ENCODE measurements at regions of chr12 and their contacts with region 1.

Region 1: GRCh38 chr12:14577344-14577743 is 9.7 kb upstream of the PLBD1 start:
- DNase-seq: peak; percentile 25
- ATAC-seq: peak; percentile 72
- H3K4me3 ChIP-seq: no peak overlapping the region
- H3K27ac ChIP-seq: no peak overlapping the region
- H3K4me1 ChIP-seq: peaks cover 2% of the 10 kb centered on the region; the same call in 1 of the 2 replicates
- H3K27me3 ChIP-seq: no peaks in the 10 kb centered on the region
- CTCF ChIP-seq: no peak
- EP300 ChIP-seq: no peak
- POLR2A ChIP-seq: no peak
- RAD21 ChIP-seq: no peak

Region 2: DNA sequence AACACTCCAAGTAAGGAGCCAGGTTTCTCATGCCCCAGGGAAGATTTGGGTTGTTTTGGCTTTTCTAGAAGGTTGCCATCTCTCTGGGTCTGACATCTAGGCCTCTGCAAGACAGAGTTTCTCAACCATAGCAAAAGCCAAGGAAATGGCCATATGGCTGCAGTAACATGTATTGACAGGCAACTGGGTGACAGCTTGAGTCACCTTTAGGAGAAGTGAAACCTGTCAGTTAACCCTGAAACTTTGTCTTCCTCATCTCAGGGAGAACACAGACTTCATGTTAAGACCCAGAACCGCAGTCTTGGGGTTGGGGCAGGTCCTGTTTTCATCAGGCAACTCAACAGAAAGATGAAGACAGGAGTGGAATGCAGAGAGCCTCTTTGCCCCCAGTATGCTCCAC is 36.4 kb after region 1 on chr12:
- CTCF ChIA-PET with region 1: no interaction called
- POLR2A ChIA-PET with region 1: no interaction called
- RAD21 ChIA-PET with region 1: interaction called, 9 read pairs
- SMC1A ChIA-PET with region 1: interaction called, 6 read pairs
- in situ Hi-C with region 1: no loop called
- intact Hi-C with region 1: loop called (anchors 5 kb)
- DNase-seq: peak; percentile 93
- ATAC-seq: peak; percentile 95
- H3K4me3 ChIP-seq: peak overlapping the region; percentile 24; the same call in 1 of the 2 replicates
- H3K27ac ChIP-seq: peak overlapping the region; percentile 82
- H3K4me1 ChIP-seq: peaks cover 27% of the 10 kb centered on the region
- H3K27me3 ChIP-seq: no peaks in the 10 kb centered on the region
- CTCF ChIP-seq: no peak
- EP300 ChIP-seq: peak; percentile 86 to 98
- POLR2A ChIP-seq: no peak; the same call in 1 of the 2 replicates
- RAD21 ChIP-seq: no peak

Region 3: GRCh38 chr12:14716848-14717444 is 139.6 kb after region 1 on chr12:
- CTCF ChIA-PET with region 1: interaction called, 6 read pairs
- POLR2A ChIA-PET with region 1: no interaction called
- RAD21 ChIA-PET with region 1: interaction called, 3 read pairs
- SMC1A ChIA-PET with region 1: interaction called, 6 read pairs
- in situ Hi-C with region 1: no loop called
- intact Hi-C with region 1: loop called (anchors 5 kb)
- DNase-seq: no peak
- ATAC-seq: peak; percentile 94
- H3K4me3 ChIP-seq: no peak overlapping the region
- H3K27ac ChIP-seq: no peak overlapping the region
- H3K4me1 ChIP-seq: no peaks in the 10 kb centered on the region
- H3K27me3 ChIP-seq: no peaks in the 10 kb centered on the region
- CTCF ChIP-seq: peak; percentile 56 to 70 (median 63)
- EP300 ChIP-seq: no peak
- POLR2A ChIP-seq: no peak
- RAD21 ChIP-seq: peak; percentile 67

Region 4: GRCh38 chr12:14731821-14732220 is 154.5 kb after region 1 on chr12:
- CTCF ChIA-PET with region 1: no interaction called
- POLR2A ChIA-PET with region 1: no interaction called
- RAD21 ChIA-PET with region 1: no interaction called
- SMC1A ChIA-PET with region 1: no interaction called
- in situ Hi-C with region 1: no loop called
- intact Hi-C with region 1: no loop called
- DNase-seq: no peak
- ATAC-seq: no peak
- H3K4me3 ChIP-seq: no peak overlapping the region
- H3K27ac ChIP-seq: no peak overlapping the region
- H3K4me1 ChIP-seq: no peaks in the 10 kb centered on the region
- H3K27me3 ChIP-seq: no peaks in the 10 kb centered on the region
- CTCF ChIP-seq: no peak
- EP300 ChIP-seq: no peak
- POLR2A ChIP-seq: no peak
- RAD21 ChIP-seq: no peak